ENCODE measurements at regions of chr1 and their contacts with region 1.

Region 1: GRCh38 chr1:32351399-32352238 is 10.7 kb downstream of the FAM229A start:
- DNase-seq: peak; percentile 89
- H3K4me3 Mint-ChIP-seq: peak overlapping the region; percentile 82
- H3K27ac Mint-ChIP-seq: peak overlapping the region; percentile 53
- H3K4me1 Mint-ChIP-seq: peaks cover 35% of the 10 kb centered on the region
- H3K27me3 Mint-ChIP-seq: peaks cover 6% of the 10 kb centered on the region

Region 2: DNA sequence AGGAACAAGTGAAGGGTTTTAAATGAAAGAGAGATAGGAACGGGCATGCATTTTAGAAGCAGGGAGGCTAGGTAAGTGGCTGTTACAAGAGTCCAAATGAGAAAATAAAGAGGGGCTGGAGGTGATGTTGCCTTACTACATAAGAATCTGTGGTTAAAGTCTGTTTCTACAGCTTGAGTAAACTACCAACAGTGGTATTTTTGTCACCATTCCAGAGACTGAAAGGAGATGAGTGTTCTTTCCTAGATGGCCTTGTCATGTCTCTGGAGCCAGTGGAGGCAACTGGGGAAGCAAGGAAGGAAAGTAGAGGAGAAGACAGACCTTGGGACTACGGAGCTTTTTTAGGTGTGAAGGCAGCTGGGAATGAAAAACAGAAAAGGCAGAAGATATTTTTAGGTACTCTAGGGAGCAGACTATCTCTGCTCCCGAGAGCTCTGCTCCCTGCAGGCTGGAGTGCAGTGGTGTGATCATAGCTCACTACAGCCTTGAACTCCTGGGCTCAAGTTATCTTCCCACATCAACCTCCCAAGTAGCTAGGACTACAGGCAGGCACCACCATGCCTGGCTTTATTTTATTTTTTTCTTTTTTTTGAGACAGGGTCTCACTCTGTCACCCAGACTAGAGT is 47.5 kb before region 1 on chr1:
- intact Hi-C with region 1: no loop called
- DNase-seq: no peak
- H3K4me3 Mint-ChIP-seq: no peak overlapping the region
- H3K27ac Mint-ChIP-seq: peak overlapping the region; percentile 6
- H3K4me1 Mint-ChIP-seq: peaks cover 46% of the 10 kb centered on the region
- H3K27me3 Mint-ChIP-seq: no peaks in the 10 kb centered on the region

Region 3: DNA sequence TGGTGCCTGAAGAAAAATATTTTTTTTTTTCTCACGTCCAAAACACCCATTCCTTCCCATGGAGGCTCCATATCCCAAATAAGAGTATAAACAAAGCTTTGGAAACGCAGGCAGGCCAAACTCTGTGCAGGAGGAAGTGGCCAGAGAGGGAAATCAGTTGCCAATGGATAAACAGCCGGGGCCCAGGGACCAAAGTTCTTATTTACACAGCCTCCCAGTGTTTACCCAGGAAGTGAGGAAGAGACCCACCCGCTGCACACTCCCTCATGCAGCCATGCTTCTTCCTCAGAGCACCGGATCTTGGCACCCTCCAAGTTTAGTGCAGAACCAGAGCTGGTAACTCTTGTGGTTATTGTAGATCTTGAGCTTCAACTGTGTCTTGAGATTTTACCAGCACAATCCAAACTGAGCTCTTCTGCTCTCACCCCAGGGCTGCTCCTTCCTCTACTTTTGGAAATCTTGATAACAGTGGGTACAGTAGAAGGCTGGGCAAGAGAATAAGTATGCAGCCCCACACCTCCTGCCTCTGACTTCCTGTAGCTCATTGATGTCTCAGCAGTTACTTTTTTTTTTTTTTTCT is 29.8 kb before region 1 on chr1:
- intact Hi-C with region 1: loop called (anchors 1 kb)
- DNase-seq: no peak
- H3K4me3 Mint-ChIP-seq: peak overlapping the region; percentile 53
- H3K27ac Mint-ChIP-seq: peak overlapping the region; percentile 83
- H3K4me1 Mint-ChIP-seq: peaks cover 49% of the 10 kb centered on the region
- H3K27me3 Mint-ChIP-seq: no peaks in the 10 kb centered on the region

Measured in activated T-helper 1 cell treated with anti-CD3 and anti-CD28 coated beads, Interleukin-12 subunit alpha, Interleukin-12 subunit beta, Interleukin-2, Interleukin-4 antibody, amounts not matched to agents 30 ng/mL and 10 ng/mL and 1 ng/mL, durations not matched to agents 14 hours and 24 hours and 36 hours (primary cell).